Activated T-helper 1 cell treated with anti-CD3 and anti-CD28 coated beads, Interleukin-12 subunit alpha, Interleukin-12 subunit beta, Interleukin-2, Interleukin-4 antibody, amounts not matched to agents 30 ng/mL and 10 ng/mL and 1 ng/mL, durations not matched to agents 14 hours and 24 hours and 36 hours (primary cell): ENCODE measurements at regions of chr18 and their contacts with region 1.

Region 1: GRCh38 chr18:35290073-35290735 is at the start of gene ZSCAN30:
- DNase-seq: peak; percentile 94
- H3K4me3 Mint-ChIP-seq: peak within 1 kb of the TSS; percentile 100
- H3K27ac Mint-ChIP-seq: peak within 1 kb of the TSS; percentile 99
- H3K4me1 Mint-ChIP-seq: peaks cover 49% of the 10 kb centered on the region
- H3K27me3 Mint-ChIP-seq: no peaks in the 10 kb centered on the region
- total RNA-seq, gene ZSCAN30: 10.2 and 11.0 TPM in 2 replicates

Region 2: GRCh38 chr18:34729264-34729663 is 560.9 kb before region 1 on chr18:
- intact Hi-C with region 1: no loop called
- DNase-seq: no peak
- H3K4me3 Mint-ChIP-seq: no peak overlapping the region
- H3K27ac Mint-ChIP-seq: no peak overlapping the region
- H3K4me1 Mint-ChIP-seq: no peaks in the 10 kb centered on the region
- H3K27me3 Mint-ChIP-seq: no peaks in the 10 kb centered on the region

Region 3: DNA sequence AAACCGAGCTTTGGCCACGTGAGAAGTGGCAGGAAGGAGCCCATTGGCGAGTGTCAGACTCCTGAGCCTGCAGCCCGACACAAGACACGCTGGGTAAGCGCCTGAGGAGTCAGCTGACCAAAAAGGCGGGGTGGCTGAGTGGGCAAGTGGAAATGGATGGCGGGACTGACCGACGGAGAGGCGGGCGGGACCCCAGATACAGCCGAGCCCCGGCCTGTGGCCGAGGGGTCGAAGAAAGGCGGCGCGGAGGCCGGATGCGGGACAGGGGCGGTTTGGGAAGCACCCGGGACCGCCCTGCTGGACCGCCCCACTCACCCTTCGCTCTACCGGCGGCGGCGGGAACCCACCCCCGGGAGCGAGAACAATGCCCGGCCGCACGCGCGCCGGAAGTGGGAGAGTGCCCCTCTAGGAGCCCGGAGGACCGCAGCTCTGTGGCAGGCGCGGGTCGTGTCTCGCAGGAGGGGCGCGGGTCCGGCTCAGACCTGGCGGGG is 23.0 kb before region 1 on chr18:
- intact Hi-C with region 1: loop called (anchors 1 kb)
- DNase-seq: peak; percentile 16
- H3K4me3 Mint-ChIP-seq: peak overlapping the region; percentile 83
- H3K27ac Mint-ChIP-seq: peak overlapping the region; percentile 78
- H3K4me1 Mint-ChIP-seq: peaks cover 10% of the 10 kb centered on the region
- H3K27me3 Mint-ChIP-seq: peaks cover 2% of the 10 kb centered on the region

Region 4: DNA sequence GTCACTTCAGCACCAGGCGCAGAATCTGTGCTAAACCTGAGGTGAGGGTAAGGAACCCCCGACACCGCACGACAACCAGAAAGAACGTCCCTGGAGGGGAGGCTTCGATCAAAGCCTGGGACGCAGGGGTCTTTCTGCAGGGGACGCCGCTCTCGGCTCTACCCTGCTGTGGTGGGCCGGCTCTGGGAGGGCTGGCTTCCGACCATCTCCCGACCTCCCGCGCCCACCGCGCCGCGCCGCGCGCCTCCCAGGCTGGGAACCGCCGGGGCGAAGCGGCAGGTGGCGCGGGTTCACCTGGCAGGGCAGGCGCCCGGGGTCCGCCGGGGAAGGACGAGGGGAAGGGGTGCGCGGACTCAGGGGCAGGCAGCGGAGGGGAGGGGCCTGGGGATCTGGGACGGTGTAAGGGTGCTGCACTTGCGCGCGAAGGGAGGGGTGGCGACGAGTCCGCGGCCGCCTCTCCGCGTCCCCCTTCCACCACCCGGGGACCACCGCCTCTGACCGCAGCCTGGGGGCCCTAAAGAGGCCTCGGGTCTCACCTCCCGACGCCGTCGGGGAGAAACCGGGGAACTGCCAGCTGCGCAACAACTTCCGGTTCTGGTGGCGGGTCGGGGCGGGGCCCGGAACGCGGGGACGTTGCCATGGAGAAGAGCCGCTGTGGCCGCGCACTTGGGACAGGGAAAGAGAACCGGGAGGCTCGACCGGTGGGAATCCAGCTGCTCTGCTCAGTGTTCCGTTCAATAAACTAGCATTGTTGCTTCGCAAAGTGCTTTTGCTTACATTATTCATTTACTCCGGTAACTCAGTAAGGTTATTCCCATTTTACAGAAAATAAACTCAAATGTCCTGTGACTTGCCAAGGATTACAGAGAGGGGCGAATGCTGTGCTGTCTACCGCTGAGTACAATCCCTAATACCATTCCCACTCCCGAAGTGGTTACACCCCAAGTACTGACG is 86.8 kb after region 1 on chr18 and contains the start of gene ZNF396:
- intact Hi-C with region 1: loop called (anchors 1 kb)
- DNase-seq: peak; percentile 70
- H3K4me3 Mint-ChIP-seq: peak within 1 kb of the TSS; percentile 82
- H3K27ac Mint-ChIP-seq: peak within 1 kb of the TSS; percentile 41
- H3K4me1 Mint-ChIP-seq: peaks cover 5% of the 10 kb centered on the region
- H3K27me3 Mint-ChIP-seq: peaks cover 20% of the 10 kb centered on the region
- total RNA-seq, gene ZNF396: 0.56 and 0.60 TPM in 2 replicates